ENCODE measurements at regions of chrX and their contacts with region 1.

Region 1: DNA sequence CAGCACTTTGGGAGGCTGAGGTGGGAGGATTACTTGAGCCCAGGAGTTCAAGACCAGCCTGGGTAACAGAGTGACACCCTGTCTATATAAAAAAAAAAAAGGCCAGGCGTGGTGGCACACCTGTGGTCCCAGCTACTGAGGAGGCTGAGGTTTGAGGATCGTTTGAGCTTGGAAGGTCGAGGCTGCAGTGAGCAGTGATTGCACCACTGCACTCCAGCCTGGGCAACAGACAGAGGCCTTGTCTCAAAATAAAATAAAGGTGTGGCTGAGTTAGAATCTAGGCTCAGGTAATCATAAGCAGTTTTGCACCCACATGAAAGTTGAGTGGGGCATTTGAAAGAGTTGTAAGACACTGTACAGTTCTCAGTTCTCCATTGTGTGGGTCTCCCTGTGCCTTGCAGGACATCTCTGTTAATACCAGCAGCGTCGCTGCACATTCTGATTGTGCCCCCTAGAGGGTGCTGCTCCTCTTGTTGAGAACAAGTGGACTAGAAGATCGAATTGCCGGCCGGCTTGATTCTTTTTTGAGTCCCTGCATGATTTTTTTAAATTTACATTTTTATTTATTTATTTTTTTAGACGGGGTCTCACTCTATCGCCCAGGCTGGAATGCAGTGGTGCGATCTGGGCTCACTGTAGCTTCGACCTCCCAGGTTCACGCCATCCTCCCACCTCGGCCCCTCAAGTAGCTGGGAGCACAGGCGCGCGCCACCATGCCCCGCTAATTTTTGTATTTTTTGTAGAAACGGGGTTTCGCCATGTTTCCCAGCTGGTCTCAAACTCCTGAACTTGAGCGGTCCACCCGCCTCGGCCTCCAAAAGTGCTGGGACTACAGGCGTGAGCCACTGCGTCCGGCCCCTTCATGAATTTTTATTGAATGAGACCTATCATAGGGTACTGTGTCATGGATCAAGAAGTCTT is 73.6 kb upstream of the RBMX start:
- DNase-seq: peak in 9 of 10 donors; percentile 21 to 81 (median 62)
- H3K4me3 ChIP-seq: no peak overlapping the region
- H3K27ac ChIP-seq: no peak overlapping the region
- H3K27me3 ChIP-seq: peaks cover 0 to 36% (median 5%) of the 10 kb centered on the region in 45 donors
- CTCF ChIP-seq: peak in 55 of 56 donors; percentile 21 to 66 (median 53)

Region 2: GRCh38 chrX:136608295-136609171 is 345.6 kb before region 1 on chrX:
- intact Hi-C with region 1: no loop called
- DNase-seq: peak in 4 of 10 donors; percentile 5 to 45 (median 23)
- H3K4me3 ChIP-seq: no peak overlapping the region
- H3K27ac ChIP-seq: no peak overlapping the region
- H3K27me3 ChIP-seq: peaks cover 0 to 78% (median 11%) of the 10 kb centered on the region in 45 donors
- CTCF ChIP-seq: peak in 32 of 56 donors; percentile 9 to 56 (median 26)

Region 3: DNA sequence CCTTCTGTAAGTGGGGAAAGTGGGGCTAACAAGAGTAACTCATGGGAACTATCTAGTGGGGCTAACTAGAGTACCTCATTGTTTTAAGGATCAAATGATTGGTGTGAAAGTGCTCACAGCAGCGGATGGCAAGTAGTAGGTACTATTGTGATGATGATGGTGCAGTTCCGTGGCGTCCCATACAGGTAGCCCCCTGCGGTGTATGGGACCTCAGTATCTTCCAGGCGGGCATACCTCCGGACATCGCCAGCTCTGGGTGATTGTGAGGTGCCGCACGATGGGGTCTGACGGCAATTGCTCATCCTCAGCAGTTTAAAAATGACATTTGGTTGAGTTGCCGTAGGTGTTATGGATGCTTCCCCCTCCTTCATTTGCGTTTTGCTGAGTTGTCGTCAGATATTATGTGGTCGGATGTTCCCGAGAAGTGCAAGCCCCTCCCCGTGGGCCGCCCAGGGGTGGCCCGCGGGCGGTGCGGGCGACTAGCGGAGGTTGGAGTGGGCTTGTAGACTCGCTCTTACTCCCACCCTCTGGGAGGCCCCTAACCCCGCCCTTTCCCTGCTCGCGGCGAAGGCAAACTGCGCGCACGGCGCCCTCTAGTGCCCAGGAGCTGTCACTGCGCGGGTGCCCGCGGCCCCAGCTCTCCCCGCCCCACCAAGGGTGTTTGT is 98.0 kb after region 1 on chrX:
- intact Hi-C with region 1: loop called in 1 of 2 experiments (anchors 10 kb)
- DNase-seq: peak in 8 of 10 donors; percentile 28 to 79 (median 46)
- H3K4me3 ChIP-seq: peak overlapping the region; percentile 22 to 66 (median 50)
- H3K27ac ChIP-seq: no peak overlapping the region
- H3K27me3 ChIP-seq: peaks cover 0 to 84% (median 27%) of the 10 kb centered on the region in 45 donors
- CTCF ChIP-seq: peak; percentile 14 to 78 (median 68)

Region 4: DNA sequence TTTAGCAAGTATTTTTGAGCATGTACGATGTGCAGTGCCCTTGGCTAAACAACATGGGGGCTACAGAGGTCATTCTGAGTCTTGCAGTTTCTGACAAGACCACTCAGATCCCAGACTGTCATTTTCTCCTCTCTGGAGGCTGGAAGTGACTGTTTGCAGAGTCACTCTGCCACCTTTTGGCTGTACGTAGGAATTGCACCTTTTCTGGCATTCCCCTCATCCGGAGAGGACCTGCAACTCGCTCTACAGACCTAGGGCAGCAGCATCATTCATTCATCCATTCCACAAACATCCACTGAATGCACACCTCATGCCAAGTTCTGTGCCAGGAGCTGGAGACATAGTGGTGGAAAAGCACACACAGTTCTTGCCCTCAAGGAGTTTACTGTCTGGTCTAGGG is 240.0 kb after region 1 on chrX:
- intact Hi-C with region 1: loop called (anchors 10 kb)
- DNase-seq: peak in 4 of 10 donors; percentile 4 to 42 (median 22)
- H3K4me3 ChIP-seq: no peak overlapping the region
- H3K27ac ChIP-seq: no peak overlapping the region
- H3K27me3 ChIP-seq: peaks cover 0 to 75% (median 25%) of the 10 kb centered on the region in 45 donors
- CTCF ChIP-seq: peak in 54 of 56 donors; percentile 20 to 61 (median 45)